ENCODE measurements at regions of chr2 and their contacts with region 1.

Region 1: DNA sequence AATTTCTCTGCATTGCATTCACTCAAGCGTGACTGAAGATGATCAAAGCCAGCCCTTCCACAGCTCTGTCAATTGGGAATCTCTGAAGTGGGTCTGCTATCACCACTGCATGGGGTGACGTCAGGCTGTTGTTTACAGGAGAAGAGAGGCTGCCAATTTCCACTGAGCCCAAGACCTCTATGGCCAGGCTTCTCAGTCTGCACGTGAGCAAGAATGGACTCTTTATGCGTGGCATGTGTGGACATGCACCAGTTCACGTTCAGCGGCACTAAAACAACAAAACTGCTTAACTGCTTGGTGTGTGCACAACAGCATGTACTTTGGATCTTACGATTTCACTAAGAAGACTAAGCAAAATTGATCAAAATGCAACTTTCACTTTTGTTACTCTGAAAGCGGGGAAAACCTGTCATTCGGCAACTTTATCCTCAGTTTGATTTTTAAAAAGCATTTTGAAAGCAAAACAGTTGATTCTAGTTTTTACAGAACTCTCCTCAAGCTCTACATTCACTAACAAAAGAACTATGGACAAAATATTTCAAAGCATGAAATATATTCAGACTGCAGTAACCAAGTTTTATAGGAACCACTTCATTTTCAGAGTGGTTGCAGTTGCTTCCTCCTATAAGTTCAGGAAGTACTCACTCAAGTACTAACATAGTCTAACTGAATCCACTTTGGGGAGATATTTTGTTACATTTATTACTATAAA is 77.0 kb upstream of the SERTAD2 start:
- DNase-seq: peak; percentile 70
- ATAC-seq: peak; percentile 47
- H3K4me3 ChIP-seq: peak overlapping the region; percentile 43 to 81 (median 61)
- H3K4me3 Mint-ChIP-seq: peak overlapping the region; percentile 87
- H3K27ac ChIP-seq: peak overlapping the region; percentile 84
- H3K27ac Mint-ChIP-seq: peak overlapping the region; percentile 97
- H3K4me1 ChIP-seq: peaks cover 50% of the 10 kb centered on the region in 2 donors
- H3K4me1 Mint-ChIP-seq: peaks cover 57% of the 10 kb centered on the region
- H3K27me3 ChIP-seq: no peaks in the 10 kb centered on the region
- H3K27me3 Mint-ChIP-seq: no peaks in the 10 kb centered on the region
- CTCF ChIP-seq: no peak

Region 2: DNA sequence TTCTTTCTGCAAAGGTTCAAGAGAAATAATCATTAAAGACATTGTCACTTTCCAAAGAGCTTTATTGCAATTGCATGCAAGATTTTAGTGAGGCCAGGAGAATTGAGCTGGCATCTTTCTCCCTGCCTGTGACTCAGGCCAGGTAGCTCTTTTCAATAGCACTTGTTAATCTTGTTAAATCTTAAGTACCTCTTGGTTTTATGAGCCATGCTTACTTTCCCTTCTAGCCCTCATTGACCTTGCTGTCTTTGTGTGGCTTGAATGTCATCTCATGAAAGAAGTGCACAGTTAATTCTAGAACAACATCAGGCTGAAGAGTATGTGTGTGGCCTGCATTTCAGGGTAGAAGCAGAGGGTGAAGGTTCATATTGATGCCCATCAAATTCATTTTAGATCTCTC is 291.5 kb before region 1 on chr2:
- CTCF ChIA-PET with region 1: no interaction called
- POLR2A ChIA-PET with region 1: no interaction called
- intact Hi-C with region 1: no loop called
- DNase-seq: no peak
- ATAC-seq: no peak
- H3K4me3 ChIP-seq: no peak overlapping the region
- H3K4me3 Mint-ChIP-seq: no peak overlapping the region
- H3K27ac ChIP-seq: no peak overlapping the region
- H3K27ac Mint-ChIP-seq: no peak overlapping the region
- H3K4me1 ChIP-seq: no peaks in the 10 kb centered on the region
- H3K4me1 Mint-ChIP-seq: no peaks in the 10 kb centered on the region
- H3K27me3 ChIP-seq: peaks cover 0 to 6% (median 0%) of the 10 kb centered on the region in 4 experiments
- H3K27me3 Mint-ChIP-seq: peaks cover 39% of the 10 kb centered on the region
- CTCF ChIP-seq: no peak

Region 3: DNA sequence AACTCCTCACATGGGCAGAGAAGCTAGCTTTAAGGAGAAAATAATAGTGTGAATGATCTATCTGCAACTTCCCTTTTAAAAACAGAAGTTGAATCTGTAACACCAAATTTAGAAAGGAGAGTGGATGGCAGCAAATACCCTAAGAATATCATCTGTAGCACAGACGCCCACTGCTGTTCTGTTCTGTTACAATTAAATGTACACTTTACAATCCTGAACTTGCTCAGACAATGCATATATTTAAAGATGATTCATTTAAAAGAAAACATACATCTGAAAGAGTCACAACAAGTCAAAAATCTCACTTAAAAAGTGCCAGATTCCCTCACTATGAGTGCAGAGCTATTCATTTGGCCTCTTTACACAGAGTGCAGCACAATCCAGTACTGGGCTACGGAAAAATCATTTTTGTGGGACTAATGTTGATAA is 69.0 kb before region 1 on chr2:
- CTCF ChIA-PET with region 1: interaction called, 46 read pairs
- POLR2A ChIA-PET with region 1: interaction called, 5 read pairs
- intact Hi-C with region 1: loop called (anchors 2 kb)
- DNase-seq: peak; percentile 67
- ATAC-seq: peak; percentile 46
- H3K4me3 ChIP-seq: peak overlapping the region in 3 of 5 experiments; percentile 7 to 21 (median 10)
- H3K4me3 Mint-ChIP-seq: peak overlapping the region; percentile 58
- H3K27ac ChIP-seq: peak overlapping the region; percentile 37 to 62
- H3K27ac Mint-ChIP-seq: peak overlapping the region; percentile 81
- H3K4me1 ChIP-seq: peaks cover 76 to 82% of the 10 kb centered on the region in 2 donors
- H3K4me1 Mint-ChIP-seq: peaks cover 69% of the 10 kb centered on the region
- H3K27me3 ChIP-seq: no peaks in the 10 kb centered on the region
- H3K27me3 Mint-ChIP-seq: no peaks in the 10 kb centered on the region
- CTCF ChIP-seq: peak; percentile 37

Region 4: DNA sequence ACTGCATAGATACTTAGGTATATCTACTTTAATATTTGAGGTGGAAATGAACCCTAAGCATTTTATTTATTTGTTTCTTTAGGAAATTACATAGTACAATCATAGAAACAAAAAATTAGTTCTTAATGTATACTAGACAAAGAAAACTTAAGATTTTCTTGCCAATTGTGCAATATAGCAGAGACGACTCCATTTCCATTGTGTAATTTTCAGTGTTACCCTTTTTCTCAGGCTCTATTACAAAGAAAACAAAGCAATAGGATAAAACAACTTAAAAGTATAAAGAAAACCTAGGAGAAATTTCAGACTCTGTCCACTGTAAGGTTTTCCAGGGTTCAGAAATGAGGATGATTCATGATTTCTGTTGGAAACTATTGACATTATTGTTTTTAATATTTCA is 12.0 kb after region 1 on chr2:
- CTCF ChIA-PET with region 1: interaction called, 28 read pairs
- POLR2A ChIA-PET with region 1: interaction called, 38 read pairs
- intact Hi-C with region 1: no loop called
- DNase-seq: no peak
- ATAC-seq: no peak
- H3K4me3 ChIP-seq: no peak overlapping the region
- H3K4me3 Mint-ChIP-seq: no peak overlapping the region
- H3K27ac ChIP-seq: no peak overlapping the region
- H3K27ac Mint-ChIP-seq: no peak overlapping the region
- H3K4me1 ChIP-seq: no peaks in the 10 kb centered on the region
- H3K4me1 Mint-ChIP-seq: peaks cover 7% of the 10 kb centered on the region
- H3K27me3 ChIP-seq: no peaks in the 10 kb centered on the region
- H3K27me3 Mint-ChIP-seq: no peaks in the 10 kb centered on the region
- CTCF ChIP-seq: no peak

Region 5: DNA sequence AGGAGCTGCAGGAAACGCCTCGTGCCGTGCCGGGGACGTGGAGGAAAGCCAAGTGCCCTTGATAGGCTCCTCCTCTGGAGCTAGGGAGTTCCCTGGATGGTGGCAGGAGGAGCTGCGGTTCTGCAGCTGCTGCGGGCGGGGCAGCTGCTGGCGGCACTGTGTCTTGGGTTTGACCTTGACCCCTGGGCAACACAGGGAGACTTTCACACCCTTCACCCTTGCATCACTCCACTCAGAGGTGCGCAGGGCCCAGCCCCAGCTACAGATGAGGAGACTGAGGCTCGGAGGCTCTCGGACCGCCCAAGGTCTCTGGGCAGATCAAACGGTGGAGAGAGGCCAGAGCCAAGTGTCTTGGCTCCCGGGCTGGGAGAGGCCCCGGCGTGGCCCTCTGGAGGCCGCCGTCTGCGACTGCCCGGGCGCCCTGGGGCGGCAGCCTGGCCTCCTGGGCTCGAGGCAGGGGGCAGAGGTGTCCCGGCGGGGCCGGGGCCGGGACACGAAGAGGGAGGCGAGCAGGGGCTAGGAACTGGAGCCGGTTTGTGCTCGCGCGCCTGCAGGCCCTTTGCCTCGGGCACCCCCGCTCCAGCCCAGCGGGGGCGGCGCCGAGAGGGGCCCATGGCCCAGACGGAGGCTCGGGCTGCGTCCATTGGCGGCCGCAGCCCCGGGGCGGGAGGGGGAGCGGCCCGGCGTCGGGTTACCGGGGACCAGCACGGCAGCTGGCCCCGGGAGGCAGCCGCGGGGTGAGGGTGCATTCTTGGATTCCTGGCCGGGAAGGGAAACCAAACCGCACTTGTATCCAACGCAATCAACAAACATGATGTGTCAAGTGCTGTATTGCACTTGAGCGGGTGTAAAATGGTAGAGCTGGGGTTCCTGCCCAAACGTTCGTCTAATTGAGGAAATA is 128.9 kb after region 1 on chr2:
- CTCF ChIA-PET with region 1: interaction called, 6 read pairs
- POLR2A ChIA-PET with region 1: interaction called, 4 read pairs
- intact Hi-C with region 1: loop called (anchors 2 kb)
- DNase-seq: peak; percentile 69
- ATAC-seq: peak; percentile 11
- H3K4me3 ChIP-seq: peak overlapping the region; percentile 61 to 79 (median 67)
- H3K4me3 Mint-ChIP-seq: peak overlapping the region; percentile 79
- H3K27ac ChIP-seq: peak overlapping the region; percentile 91 to 93
- H3K27ac Mint-ChIP-seq: no peak overlapping the region
- H3K4me1 ChIP-seq: peaks cover 76 to 80% of the 10 kb centered on the region in 2 donors
- H3K4me1 Mint-ChIP-seq: peaks cover 28% of the 10 kb centered on the region
- H3K27me3 ChIP-seq: no peaks in the 10 kb centered on the region
- H3K27me3 Mint-ChIP-seq: no peaks in the 10 kb centered on the region
- CTCF ChIP-seq: no peak

Region 6: GRCh38 chr2:64865073-64865830 is 134.5 kb after region 1 on chr2:
- CTCF ChIA-PET with region 1: interaction called, 4 read pairs
- POLR2A ChIA-PET with region 1: interaction called, 4 read pairs
- intact Hi-C with region 1: loop called (anchors 2 kb)
- DNase-seq: peak; percentile 86
- ATAC-seq: peak; percentile 54
- H3K4me3 ChIP-seq: peak overlapping the region; percentile 46 to 88 (median 64)
- H3K4me3 Mint-ChIP-seq: no peak overlapping the region
- H3K27ac ChIP-seq: peak overlapping the region; percentile 91 to 93
- H3K27ac Mint-ChIP-seq: peak overlapping the region; percentile 53
- H3K4me1 ChIP-seq: peaks cover 49 to 60% of the 10 kb centered on the region in 2 donors
- H3K4me1 Mint-ChIP-seq: peaks cover 1% of the 10 kb centered on the region
- H3K27me3 ChIP-seq: no peaks in the 10 kb centered on the region
- H3K27me3 Mint-ChIP-seq: no peaks in the 10 kb centered on the region
- CTCF ChIP-seq: peak; percentile 85

Measured in B cell (primary cell).